ENCODE measurements at regions of chr3 and their contacts with region 1.

Region 1: DNA sequence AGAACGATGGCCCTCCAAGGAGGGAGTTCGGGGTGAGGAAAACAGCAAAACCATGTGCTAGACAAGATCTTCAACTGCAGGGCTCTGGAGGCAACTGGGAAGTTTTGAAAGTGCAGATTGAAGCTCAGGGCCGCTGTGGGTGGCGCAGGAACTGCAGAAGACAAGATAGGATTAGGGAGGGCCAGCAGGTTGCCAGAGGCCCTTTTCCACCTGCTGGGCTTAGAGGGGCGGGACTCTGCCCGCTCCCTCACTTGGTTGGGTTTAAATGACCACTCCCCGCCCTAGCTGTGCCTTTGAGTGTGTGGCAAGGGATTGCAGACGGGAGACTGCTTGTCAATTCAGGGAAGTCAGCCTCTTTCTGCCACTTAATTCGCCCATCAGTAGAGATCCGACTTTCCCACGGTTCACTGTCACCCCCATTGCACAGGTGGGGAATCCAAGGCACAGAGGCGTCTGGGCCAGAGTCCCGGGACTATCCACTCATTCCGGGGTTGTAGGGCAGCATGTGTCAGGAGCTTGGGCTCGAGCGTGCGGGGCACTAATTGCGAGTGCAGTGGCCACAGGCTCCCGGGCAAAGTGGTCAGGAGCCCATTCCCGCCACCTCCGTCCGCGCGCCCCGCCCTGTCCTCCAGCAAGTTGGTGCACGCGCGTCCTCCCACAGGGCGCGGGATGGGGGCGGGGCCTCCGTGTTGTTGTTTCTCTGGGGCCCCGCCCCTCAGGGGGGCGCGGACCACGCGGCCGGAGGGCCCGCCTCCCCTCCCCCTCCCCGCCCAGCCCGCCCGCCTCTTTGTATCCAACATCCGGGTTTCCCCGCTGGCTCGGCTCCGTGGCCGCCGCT is at the start of gene ACVR2B:
- DNase-seq: peak; percentile 97
- ATAC-seq: peak; percentile 92
- total RNA-seq, gene ACVR2B: 4.8 TPM

Region 2: GRCh38 chr3:38136777-38137614 is 316.3 kb before region 1 on chr3 and contains the start of gene ACAA1:
- intact Hi-C with region 1: loop called (anchors 10 kb)
- DNase-seq: peak; percentile 100
- ATAC-seq: peak; percentile 99
- total RNA-seq, gene ACAA1: 116 TPM

Region 3: GRCh38 chr3:38473229-38473628 is 19.9 kb after region 1 on chr3:
- intact Hi-C with region 1: no loop called
- DNase-seq: no peak
- ATAC-seq: peak; percentile 18

Region 4: DNA sequence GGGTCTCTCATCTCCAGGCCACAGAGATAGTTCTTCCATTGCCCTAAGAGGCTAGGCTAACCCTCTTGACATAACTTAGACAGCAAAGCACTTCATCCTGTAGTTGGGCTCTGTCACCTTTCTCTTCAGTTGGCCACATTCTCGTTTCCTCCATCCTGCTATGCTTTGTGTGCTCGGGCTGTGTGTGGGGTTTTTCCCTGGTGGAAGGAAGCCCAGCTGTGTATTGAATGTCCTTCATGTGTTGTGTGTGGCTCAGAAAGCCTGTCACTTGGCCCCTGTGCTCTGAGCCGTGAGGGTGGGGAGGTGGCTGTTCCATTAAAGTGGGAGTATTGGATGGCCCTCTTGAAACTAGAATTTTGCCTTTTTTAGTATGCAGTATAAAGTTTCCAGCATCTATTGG is 34.0 kb after region 1 on chr3:
- intact Hi-C with region 1: loop called (anchors 5 kb)
- DNase-seq: no peak
- ATAC-seq: no peak

Region 5: DNA sequence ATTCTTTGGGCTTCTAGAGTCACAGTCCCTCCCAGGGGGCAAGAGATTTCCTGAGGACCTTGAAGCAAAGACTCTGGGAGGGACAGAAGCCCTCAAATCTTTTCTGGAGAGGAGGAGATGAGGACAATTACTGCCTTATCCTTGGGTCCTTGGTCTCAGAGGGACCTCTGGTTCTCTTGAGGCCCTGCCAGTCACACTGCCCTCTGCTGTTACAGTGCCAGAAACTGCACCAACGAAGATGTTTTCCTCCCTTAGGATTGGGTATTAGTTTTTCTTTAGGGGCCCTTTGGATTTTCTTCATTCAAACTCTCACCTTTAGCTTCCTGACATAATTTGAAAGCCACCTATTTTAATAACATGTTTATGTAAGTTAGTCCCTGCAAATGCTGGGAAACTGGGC is 254.4 kb after region 1 on chr3:
- intact Hi-C with region 1: no loop called
- DNase-seq: no peak
- ATAC-seq: no peak

Region 6: DNA sequence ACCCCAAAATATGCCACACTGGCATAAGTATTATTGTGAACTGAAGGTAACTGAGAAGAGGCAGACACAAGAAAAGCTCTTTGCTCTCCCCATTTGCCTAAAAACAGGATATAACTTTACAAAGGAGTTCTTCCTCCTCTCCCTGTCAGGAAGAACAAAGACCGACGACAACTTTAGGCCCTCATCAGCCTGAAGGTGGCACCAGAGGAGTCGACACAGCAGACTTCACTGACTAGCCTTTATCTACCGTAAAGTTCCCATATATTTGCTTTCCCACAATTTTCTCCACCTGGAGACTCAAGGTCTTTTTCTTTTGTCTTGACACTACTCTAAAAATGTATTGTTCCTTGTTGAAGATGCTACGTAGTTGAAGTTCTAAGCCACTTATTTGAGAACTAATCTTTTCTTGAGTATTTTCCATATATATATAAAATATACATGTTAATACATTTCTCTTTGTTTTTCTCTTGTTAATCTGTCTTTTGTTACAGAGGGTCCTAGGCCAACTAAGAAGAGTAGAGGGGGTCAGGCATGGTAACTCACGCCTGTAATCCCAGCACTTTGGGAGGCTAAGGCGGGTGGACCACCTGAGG is 755.3 kb after region 1 on chr3:
- intact Hi-C with region 1: no loop called
- DNase-seq: peak; percentile 68
- ATAC-seq: peak; percentile 81